ENCODE measurements at regions of chr16 and their contacts with region 1.

Region 1: GRCh38 chr16:21083729-21084268 is 66.8 kb downstream of the DNAH3 start:
- DNase-seq: peak; percentile 66
- H3K4me3 Mint-ChIP-seq: no peak overlapping the region
- H3K27ac Mint-ChIP-seq: no peak overlapping the region
- H3K4me1 Mint-ChIP-seq: no peaks in the 10 kb centered on the region
- H3K27me3 Mint-ChIP-seq: peaks cover 6% of the 10 kb centered on the region

Region 2: GRCh38 chr16:20774703-20775362 is 309.0 kb before region 1 on chr16:
- CTCF ChIA-PET with region 1: interaction called, 10 read pairs
- POLR2A ChIA-PET with region 1: no interaction called
- intact Hi-C with region 1: loop called (anchors 1 kb)
- DNase-seq: peak; percentile 77
- H3K4me3 Mint-ChIP-seq: no peak overlapping the region
- H3K27ac Mint-ChIP-seq: no peak overlapping the region
- H3K4me1 Mint-ChIP-seq: no peaks in the 10 kb centered on the region
- H3K27me3 Mint-ChIP-seq: no peaks in the 10 kb centered on the region

Region 3: GRCh38 chr16:20844588-20844987 is 239.2 kb before region 1 on chr16:
- CTCF ChIA-PET with region 1: interaction called, 67 read pairs
- POLR2A ChIA-PET with region 1: no interaction called
- intact Hi-C with region 1: no loop called
- DNase-seq: peak; percentile 34
- H3K4me3 Mint-ChIP-seq: no peak overlapping the region
- H3K27ac Mint-ChIP-seq: peak overlapping the region; percentile 29
- H3K4me1 Mint-ChIP-seq: peaks cover 22% of the 10 kb centered on the region
- H3K27me3 Mint-ChIP-seq: no peaks in the 10 kb centered on the region

Region 4: GRCh38 chr16:20849587-20850390 is 234.0 kb before region 1 on chr16:
- CTCF ChIA-PET with region 1: interaction called, 67 read pairs
- POLR2A ChIA-PET with region 1: no interaction called
- intact Hi-C with region 1: loop called (anchors 2 kb)
- DNase-seq: peak; percentile 75
- H3K4me3 Mint-ChIP-seq: no peak overlapping the region
- H3K27ac Mint-ChIP-seq: no peak overlapping the region
- H3K4me1 Mint-ChIP-seq: peaks cover 11% of the 10 kb centered on the region
- H3K27me3 Mint-ChIP-seq: no peaks in the 10 kb centered on the region

Measured in activated CD4-positive, alpha-beta memory T cell treated with anti-CD3 and anti-CD28 coated beads for 36 hours (primary cell).